PC-9 (cell line): ENCODE measurements at regions of chr10 and their contacts with region 1.

Region 1: GRCh38 chr10:6176691-6177231 is 26.0 kb upstream of the PFKFB3 start:
- DNase-seq: no peak
- H3K4me3 ChIP-seq: no peak overlapping the region
- H3K27ac ChIP-seq: no peak overlapping the region
- H3K4me1 ChIP-seq: no peaks in the 10 kb centered on the region
- H3K27me3 ChIP-seq: no peaks in the 10 kb centered on the region
- CTCF ChIP-seq: no peak

Region 2: DNA sequence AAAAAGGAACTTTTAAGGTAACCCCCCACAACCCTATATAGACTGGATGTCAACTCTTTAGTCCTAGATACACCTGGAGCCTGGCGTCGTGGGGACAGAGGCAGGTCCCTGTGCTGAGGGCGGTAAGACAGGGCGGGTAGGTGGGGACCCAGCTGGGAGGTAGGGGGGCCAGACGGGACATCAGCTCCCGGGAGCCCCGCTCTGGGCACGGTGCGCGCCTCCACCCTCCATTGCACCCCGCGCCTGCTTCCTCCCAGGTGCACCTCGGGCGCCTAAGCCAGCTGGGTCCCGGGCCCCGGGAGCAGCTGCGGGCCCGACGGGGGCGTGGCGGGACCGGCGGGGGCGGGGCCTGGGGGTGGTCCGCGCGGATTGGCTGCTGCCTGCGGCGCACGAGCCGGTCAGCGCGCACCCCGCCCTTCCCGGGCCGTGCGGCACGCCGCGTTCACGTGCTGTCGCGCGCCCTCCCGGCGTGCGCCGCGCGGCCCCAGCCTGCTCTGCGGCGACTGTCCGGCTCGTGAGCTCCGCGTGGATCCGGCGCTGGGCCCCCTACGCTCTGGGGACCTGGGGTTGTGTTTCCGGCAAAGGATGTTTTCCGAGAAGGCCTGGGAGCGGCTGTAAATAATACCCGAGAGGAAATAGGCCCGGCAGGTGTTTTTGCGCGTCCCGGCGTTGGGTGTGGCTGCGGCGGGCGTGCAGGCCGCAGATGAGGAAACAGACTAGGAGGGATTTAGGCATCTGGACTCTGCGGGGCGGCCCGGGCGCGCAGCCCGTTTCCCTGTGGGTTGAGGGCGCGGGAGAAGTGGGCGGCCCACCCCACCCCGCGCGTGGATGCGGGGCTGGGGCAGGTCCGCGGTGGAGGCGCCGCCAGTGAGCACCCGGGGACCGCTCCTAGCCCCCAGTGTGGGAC is 13.1 kb before region 1 on chr10:
- CTCF ChIA-PET with region 1: no interaction called
- POLR2A ChIA-PET with region 1: interaction called, 17 read pairs
- intact Hi-C with region 1: no loop called
- DNase-seq: peak; percentile 57 to 85
- H3K4me3 ChIP-seq: peak overlapping the region; percentile 84
- H3K27ac ChIP-seq: peak overlapping the region; percentile 71
- H3K4me1 ChIP-seq: peaks cover 5% of the 10 kb centered on the region; the same call in 1 of the 2 replicates
- H3K27me3 ChIP-seq: no peaks in the 10 kb centered on the region
- CTCF ChIP-seq: no peak